Panc1 (cell line): ENCODE measurements at regions of chr11 and their contacts with region 1.

Region 1: GRCh38 chr11:83292709-83293456 is 6.7 kb upstream of the CCDC90B start:
- DNase-seq: peak; percentile 17
- ATAC-seq: peak; percentile 93
- H3K4me3 ChIP-seq: no peak overlapping the region
- H3K27ac ChIP-seq: no peak overlapping the region
- H3K4me1 ChIP-seq: no peaks in the 10 kb centered on the region
- H3K27me3 ChIP-seq: peaks cover 2% of the 10 kb centered on the region; the same call in 1 of the 2 replicates
- CTCF ChIP-seq: peak; percentile 85

Region 2: DNA sequence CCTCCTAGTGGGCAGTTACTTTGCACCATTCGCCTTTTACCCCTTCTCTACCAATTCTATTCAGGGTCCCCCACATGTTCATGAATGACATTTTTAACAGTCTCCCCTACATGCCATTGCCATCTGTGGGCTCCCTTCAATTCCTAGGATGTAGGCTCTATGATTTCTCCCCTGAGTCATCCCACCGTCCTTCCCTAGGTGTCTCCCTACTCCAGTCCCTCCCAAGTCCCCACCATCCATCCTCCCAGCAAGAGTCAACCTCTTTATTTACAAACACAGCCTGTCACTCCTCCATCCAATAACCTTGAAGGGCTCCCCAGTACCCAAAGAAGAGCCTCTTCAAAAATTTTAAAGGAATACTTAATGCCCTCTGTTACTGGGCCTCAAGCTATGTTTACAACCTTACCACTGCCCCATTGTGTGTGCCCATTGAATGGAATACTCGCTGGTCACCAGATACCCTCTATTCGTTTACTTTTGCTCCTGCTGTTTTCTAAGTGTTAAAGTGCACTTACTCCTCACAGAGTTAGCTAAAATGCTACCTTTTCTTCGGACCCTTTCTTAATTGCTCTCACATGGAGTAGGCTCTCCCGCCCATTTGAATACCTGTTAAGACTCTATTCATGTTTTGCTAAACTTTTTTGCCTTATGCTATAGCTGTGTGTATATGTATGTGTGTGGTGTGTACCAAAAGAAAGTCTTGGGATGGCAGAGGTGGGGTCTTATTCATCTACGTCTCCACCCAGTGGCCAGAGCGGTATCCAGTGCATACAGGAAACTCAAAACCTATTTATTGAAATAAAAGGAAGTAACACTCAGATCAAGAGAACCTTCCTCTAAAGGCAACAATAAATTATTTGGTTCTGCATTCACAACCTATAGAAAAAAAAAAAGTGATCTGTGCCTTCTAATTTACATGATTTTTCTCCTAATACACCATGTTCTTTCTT is 229.0 kb after region 1 on chr11:
- CTCF ChIA-PET with region 1: no interaction called
- POLR2A ChIA-PET with region 1: no interaction called
- in situ Hi-C with region 1: no loop called
- intact Hi-C with region 1: loop called (anchors 10 kb)
- DNase-seq: no peak
- ATAC-seq: peak; percentile 65; the same call in 1 of the 2 replicates
- H3K4me3 ChIP-seq: no peak overlapping the region
- H3K27ac ChIP-seq: no peak overlapping the region
- H3K4me1 ChIP-seq: no peaks in the 10 kb centered on the region
- H3K27me3 ChIP-seq: peaks cover 5% of the 10 kb centered on the region
- CTCF ChIP-seq: peak; percentile 43

Region 3: DNA sequence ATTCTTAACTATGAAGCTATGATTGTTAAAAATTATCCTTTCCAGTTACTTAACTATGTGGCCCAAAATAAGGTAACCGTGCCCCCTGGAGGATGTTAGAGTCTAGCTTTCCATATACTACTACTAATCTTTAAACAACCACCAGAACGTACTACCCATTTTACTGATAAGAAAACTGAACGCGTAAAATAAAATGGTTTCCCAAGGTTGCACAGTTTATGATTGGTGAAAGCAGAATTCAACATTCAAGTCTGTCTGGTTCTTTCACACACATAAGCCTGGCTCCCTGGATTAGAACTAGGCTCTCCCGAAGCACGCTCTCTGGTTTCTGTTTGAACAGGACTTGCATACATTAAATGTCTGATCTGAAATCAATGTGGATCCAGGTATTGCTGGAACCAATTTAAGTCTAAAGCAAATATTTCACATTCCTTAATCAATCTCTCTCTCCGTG is 431.2 kb after region 1 on chr11:
- CTCF ChIA-PET with region 1: interaction called, 16 read pairs
- POLR2A ChIA-PET with region 1: no interaction called
- in situ Hi-C with region 1: no loop called
- intact Hi-C with region 1: loop called (anchors 5 kb)
- DNase-seq: peak; percentile 30
- ATAC-seq: peak; percentile 66
- H3K4me3 ChIP-seq: peak overlapping the region; percentile 2 to 45
- H3K27ac ChIP-seq: no peak overlapping the region
- H3K4me1 ChIP-seq: no peaks in the 10 kb centered on the region
- H3K27me3 ChIP-seq: peaks cover 19% of the 10 kb centered on the region
- CTCF ChIP-seq: peak; percentile 55; the same call in 1 of the 2 replicates

Region 4: DNA sequence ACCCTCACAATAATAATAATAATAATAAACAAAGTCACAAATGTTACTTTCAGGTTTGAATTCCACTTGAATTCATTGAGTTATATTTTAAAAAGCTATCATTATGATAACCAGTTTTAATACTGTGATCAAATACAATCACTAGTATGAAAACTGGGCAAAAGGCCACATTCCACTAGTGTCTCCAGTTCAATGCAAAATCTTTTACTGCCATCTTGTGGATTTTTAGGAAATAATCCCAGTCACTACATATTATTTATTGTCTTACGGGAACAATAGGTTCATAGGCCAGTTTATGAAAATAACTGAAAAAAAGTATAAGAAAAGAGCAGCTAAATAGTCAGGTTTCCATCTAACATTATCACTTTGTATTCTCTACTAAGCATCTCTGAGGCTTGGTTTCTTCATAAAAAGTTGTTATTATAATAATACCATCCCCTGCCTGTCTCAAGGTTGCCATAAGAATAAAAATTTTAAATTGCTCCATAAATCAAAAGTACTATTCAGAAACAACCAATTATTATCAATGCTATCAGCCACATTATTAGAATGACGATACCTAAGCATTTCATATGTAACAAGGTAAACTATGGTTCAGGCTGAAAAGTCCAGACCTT is 527.2 kb after region 1 on chr11:
- CTCF ChIA-PET with region 1: interaction called, 12 read pairs
- POLR2A ChIA-PET with region 1: no interaction called
- in situ Hi-C with region 1: no loop called
- intact Hi-C with region 1: loop called (anchors 2 kb)
- DNase-seq: peak; percentile 24
- ATAC-seq: peak; percentile 68
- H3K4me3 ChIP-seq: no peak overlapping the region
- H3K27ac ChIP-seq: no peak overlapping the region
- H3K4me1 ChIP-seq: no peaks in the 10 kb centered on the region
- H3K27me3 ChIP-seq: peaks cover 18% of the 10 kb centered on the region; the same call in 1 of the 2 replicates
- CTCF ChIP-seq: peak; percentile 73; the same call in 1 of the 2 replicates